ENCODE measurements at regions of chr14 and their contacts with region 1.

Region 1: DNA sequence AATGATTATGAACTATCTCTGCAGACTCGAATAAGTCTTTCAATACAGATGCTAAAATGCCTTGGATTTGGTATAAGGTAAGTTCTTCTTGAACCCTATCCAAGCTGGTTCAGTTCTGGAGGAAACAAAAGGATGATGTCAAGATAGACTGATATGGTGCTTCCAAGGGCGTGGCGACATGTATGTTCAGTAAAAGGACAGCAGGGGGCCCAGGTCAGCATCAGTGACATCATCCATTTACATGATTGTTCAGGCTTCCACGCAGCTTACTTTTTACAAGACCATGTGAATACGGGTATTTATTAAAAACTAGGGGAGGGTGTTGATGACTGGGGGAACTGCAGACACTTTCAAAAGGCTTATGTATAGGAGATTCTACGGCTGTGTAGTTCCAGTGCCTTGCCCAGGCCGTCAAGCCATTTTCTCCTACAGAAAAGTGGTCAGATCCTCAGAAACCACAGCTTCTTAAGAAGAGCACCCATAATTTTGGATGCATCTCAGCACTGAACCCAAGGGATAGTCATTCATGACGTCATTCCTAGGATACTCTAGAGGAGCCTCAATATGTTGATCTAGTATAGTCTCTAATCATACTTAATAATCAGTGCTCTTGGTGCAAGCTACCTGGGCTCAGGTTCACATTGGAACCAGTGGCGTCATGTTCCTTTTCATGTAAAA is 527.7 kb downstream of the FUT8 start:
- DNase-seq: peak in 1 of 2 experiments; percentile 40
- H3K4me3 ChIP-seq: no peak overlapping the region
- H3K4me3 Mint-ChIP-seq: no peak overlapping the region
- H3K27ac Mint-ChIP-seq: no peak overlapping the region
- H3K4me1 ChIP-seq: no peaks in the 10 kb centered on the region
- H3K4me1 Mint-ChIP-seq: no peaks in the 10 kb centered on the region
- H3K27me3 ChIP-seq: no peaks in the 10 kb centered on the region
- H3K27me3 Mint-ChIP-seq: peaks cover 4% of the 10 kb centered on the region
- CTCF ChIP-seq: peak; percentile 48 to 52

Region 2: DNA sequence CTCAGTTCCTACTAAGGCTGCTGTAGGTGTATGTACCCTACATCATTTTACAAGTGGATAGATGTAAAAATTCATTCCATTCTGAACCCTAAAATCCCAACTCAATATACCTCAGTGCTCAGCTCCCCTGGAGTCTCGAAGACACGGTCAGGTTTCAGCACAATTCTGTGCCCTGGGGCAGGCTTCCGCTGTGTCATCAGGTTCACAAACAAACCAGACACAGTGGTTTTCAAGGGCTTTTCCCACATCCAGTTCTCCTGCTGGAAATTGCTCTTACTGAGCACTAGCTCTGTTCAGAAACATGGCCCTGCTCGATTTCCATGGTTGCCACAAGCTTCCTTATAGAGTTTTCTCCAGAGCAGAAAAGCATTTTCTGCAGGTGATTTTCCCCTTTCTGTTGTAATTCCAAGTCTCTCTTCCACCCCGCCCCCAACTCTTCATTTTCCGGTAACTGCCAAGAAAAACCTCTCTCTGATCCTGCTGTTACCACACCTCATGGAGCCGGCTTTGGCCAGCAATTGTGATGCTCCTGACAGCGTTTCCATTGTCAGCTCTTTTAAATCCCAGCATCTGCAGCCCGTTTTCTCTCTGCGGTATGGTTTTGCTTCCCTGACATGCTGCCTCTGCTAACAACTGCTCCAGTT is 63.0 kb after region 1 on chr14:
- CTCF ChIA-PET with region 1: no interaction called
- POLR2A ChIA-PET with region 1: no interaction called
- intact Hi-C with region 1: no loop called
- DNase-seq: no peak
- H3K4me3 ChIP-seq: no peak overlapping the region
- H3K4me3 Mint-ChIP-seq: no peak overlapping the region
- H3K27ac Mint-ChIP-seq: no peak overlapping the region
- H3K4me1 ChIP-seq: no peaks in the 10 kb centered on the region
- H3K4me1 Mint-ChIP-seq: no peaks in the 10 kb centered on the region
- H3K27me3 ChIP-seq: no peaks in the 10 kb centered on the region
- H3K27me3 Mint-ChIP-seq: peaks cover 8% of the 10 kb centered on the region
- CTCF ChIP-seq: no peak

Region 3: DNA sequence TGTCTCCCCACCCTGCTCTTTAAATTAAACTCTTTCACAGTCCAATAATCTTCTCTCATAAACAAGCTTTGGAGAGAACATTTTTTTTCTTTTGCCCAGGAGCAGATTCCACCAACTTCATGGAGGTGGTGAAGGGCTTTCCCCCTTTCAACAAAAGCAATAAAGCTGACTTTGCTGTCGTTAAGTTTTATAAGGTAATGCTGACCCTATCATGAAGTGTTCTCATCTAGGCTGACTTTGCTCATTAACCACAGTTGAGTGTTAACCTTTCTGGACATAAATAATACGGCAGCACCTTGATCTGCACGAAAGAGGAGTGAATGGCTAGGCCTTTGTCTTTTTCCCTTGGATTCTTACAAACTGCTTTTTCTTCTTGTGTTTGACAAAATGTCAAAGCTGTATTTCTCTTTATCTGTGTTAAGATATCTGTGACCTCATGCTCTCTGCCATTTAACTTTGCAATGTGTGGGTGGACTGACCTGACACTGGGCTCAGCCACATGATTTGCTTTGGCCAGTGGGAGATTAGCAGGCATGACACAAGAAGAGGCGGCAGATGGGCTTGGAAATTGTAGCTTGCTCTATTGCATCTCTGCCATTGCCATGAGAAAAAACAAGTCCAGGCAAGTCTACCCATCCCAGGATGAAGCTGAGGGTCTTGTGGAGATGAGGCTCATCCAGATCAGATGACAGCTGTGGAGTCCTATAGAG is 75.0 kb after region 1 on chr14:
- CTCF ChIA-PET with region 1: no interaction called
- POLR2A ChIA-PET with region 1: no interaction called
- intact Hi-C with region 1: no loop called
- DNase-seq: no peak
- H3K4me3 ChIP-seq: no peak overlapping the region
- H3K4me3 Mint-ChIP-seq: no peak overlapping the region
- H3K27ac Mint-ChIP-seq: no peak overlapping the region
- H3K4me1 ChIP-seq: no peaks in the 10 kb centered on the region; the same call in 1 of the 2 replicates
- H3K4me1 Mint-ChIP-seq: no peaks in the 10 kb centered on the region
- H3K27me3 ChIP-seq: no peaks in the 10 kb centered on the region
- H3K27me3 Mint-ChIP-seq: peaks cover 7% of the 10 kb centered on the region
- CTCF ChIP-seq: no peak

Region 4: GRCh38 chr14:66070509-66071319 is 130.5 kb after region 1 on chr14:
- CTCF ChIA-PET with region 1: no interaction called
- POLR2A ChIA-PET with region 1: no interaction called
- intact Hi-C with region 1: loop called (anchors 1 kb)
- DNase-seq: peak; percentile 62 to 78
- H3K4me3 ChIP-seq: no peak overlapping the region
- H3K4me3 Mint-ChIP-seq: no peak overlapping the region
- H3K27ac Mint-ChIP-seq: no peak overlapping the region
- H3K4me1 ChIP-seq: no peaks in the 10 kb centered on the region
- H3K4me1 Mint-ChIP-seq: no peaks in the 10 kb centered on the region
- H3K27me3 ChIP-seq: no peaks in the 10 kb centered on the region; the same call in 1 of the 2 replicates
- H3K27me3 Mint-ChIP-seq: peaks cover 22% of the 10 kb centered on the region
- CTCF ChIP-seq: peak; percentile 85 to 90

Measured in Caco-2 (cell line).